ENCODE measurements at regions of chr4 and their contacts with region 1.

Region 1: GRCh38 chr4:153249199-153250041 is 45.2 kb downstream of the TRIM2 start:
- DNase-seq: peak; percentile 91
- H3K4me3 Mint-ChIP-seq: peak overlapping the region; percentile 81
- H3K27ac Mint-ChIP-seq: peak overlapping the region; percentile 82
- H3K4me1 Mint-ChIP-seq: peaks cover 16% of the 10 kb centered on the region
- H3K27me3 Mint-ChIP-seq: no peaks in the 10 kb centered on the region

Region 2: DNA sequence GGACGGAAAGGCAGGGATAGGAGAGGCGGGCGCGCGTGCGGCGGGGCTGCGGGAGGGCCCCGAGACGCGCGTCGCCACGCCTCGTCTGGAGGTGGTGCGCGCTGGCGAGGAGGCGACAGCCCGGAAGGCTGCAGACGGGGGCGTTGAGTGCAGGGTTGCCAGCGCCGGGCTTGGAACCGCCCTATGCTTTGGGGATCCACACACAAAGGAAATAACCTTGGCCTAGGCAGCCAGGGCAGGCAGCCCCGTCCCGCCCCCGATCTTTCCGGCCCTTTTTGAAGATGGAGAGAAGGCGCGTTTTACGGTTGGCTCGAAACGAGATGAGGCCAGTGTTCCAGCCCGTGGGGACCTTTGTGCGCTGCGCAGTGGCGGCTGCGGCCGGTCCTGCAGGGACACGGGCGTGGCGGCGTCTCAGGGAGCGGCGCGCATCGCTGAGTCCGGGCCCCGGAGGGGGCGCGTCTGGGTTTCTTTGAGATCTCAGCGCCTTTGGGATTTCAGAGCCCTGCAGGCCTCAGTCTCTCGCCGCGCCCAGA is 96.0 kb before region 1 on chr4:
- CTCF ChIA-PET with region 1: interaction called, 3 read pairs
- POLR2A ChIA-PET with region 1: no interaction called
- intact Hi-C with region 1: loop called (anchors 2 kb)
- DNase-seq: peak; percentile 89
- H3K4me3 Mint-ChIP-seq: peak overlapping the region; percentile 78
- H3K27ac Mint-ChIP-seq: peak overlapping the region; percentile 83
- H3K4me1 Mint-ChIP-seq: peaks cover 53% of the 10 kb centered on the region
- H3K27me3 Mint-ChIP-seq: peaks cover 2% of the 10 kb centered on the region

Region 3: GRCh38 chr4:153281476-153281875 is 32.1 kb after region 1 on chr4:
- CTCF ChIA-PET with region 1: no interaction called
- POLR2A ChIA-PET with region 1: no interaction called
- intact Hi-C with region 1: no loop called
- DNase-seq: no peak
- H3K4me3 Mint-ChIP-seq: no peak overlapping the region
- H3K27ac Mint-ChIP-seq: no peak overlapping the region
- H3K4me1 Mint-ChIP-seq: no peaks in the 10 kb centered on the region
- H3K27me3 Mint-ChIP-seq: no peaks in the 10 kb centered on the region

Region 4: DNA sequence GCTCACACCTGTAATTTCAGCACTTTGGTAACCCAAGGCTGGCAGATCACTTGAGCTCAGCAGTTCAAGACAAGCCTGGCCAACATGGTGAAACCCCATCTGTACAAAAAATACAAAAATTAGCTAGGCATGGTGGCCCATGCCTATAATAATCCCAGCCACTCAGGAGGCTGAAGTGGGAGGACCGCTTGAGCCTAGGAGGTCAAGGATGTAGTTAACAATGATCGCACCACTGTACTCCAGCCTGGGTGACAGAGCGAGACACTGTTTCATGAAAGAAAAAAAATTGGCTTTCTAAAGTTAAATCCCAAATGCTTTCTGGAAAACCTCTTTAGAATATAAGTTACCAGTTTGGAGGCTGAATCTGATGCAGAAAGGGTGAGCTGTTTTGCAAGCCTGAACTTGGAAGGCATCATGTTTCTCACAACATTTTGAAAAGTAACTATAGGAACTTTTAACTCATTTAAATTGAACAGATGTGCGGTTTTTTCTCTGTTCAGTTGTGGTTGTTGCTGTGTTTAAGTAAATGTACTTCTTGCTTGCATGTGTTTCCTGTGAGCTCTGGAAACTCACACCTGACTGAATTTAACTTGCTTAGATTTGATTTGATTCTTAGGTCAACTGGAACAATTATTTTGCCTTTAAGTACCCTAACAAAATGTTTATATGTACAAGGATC is 176.9 kb after region 1 on chr4:
- CTCF ChIA-PET with region 1: no interaction called
- POLR2A ChIA-PET with region 1: no interaction called
- intact Hi-C with region 1: no loop called
- DNase-seq: no peak
- H3K4me3 Mint-ChIP-seq: no peak overlapping the region
- H3K27ac Mint-ChIP-seq: peak overlapping the region; percentile 23
- H3K4me1 Mint-ChIP-seq: peaks cover 57% of the 10 kb centered on the region
- H3K27me3 Mint-ChIP-seq: no peaks in the 10 kb centered on the region